ENCODE measurements at regions of chr18 and their contacts with region 1.

Region 1: DNA sequence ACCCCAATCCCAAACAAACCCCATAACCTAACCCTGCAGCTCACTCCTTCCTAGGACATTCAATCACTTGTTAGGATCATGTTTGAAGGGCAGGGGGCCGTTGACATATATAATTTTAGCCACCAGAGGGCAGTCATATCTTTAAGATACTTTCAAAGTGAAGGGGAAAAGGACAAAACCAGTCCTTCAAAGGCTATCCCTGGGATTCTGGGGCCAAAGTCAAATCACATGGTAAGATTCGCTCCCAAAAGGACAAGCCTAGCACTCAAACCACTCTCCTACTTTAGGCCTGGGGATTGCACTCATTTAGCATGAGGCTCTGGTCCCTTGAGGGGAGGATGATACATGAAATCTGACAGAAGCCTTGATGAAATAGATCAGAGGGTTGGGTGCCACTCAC is 44.6 kb downstream of the HAUS1 start:
- DNase-seq: peak; percentile 75
- ATAC-seq: peak; percentile 53
- H3K4me3 Mint-ChIP-seq: no peak overlapping the region
- H3K27ac Mint-ChIP-seq: peak overlapping the region; percentile 65
- H3K4me1 Mint-ChIP-seq: peaks cover 49% of the 10 kb centered on the region
- H3K27me3 Mint-ChIP-seq: no peaks in the 10 kb centered on the region

Region 2: GRCh38 chr18:46134920-46135675 is 13.7 kb before region 1 on chr18:
- CTCF ChIA-PET with region 1: interaction called, 10 read pairs
- POLR2A ChIA-PET with region 1: no interaction called
- DNase-seq: no peak
- ATAC-seq: no peak
- H3K4me3 Mint-ChIP-seq: no peak overlapping the region
- H3K27ac Mint-ChIP-seq: no peak overlapping the region
- H3K4me1 Mint-ChIP-seq: peaks cover 4% of the 10 kb centered on the region
- H3K27me3 Mint-ChIP-seq: no peaks in the 10 kb centered on the region

Region 3: GRCh38 chr18:46167971-46168370 is 19.2 kb after region 1 on chr18:
- CTCF ChIA-PET with region 1: interaction called, 219 read pairs
- POLR2A ChIA-PET with region 1: interaction called, 9 read pairs
- DNase-seq: peak; percentile 74
- ATAC-seq: peak; percentile 89
- H3K4me3 Mint-ChIP-seq: peak overlapping the region; percentile 69
- H3K27ac Mint-ChIP-seq: peak overlapping the region; percentile 86
- H3K4me1 Mint-ChIP-seq: peaks cover 59% of the 10 kb centered on the region
- H3K27me3 Mint-ChIP-seq: no peaks in the 10 kb centered on the region

Region 4: GRCh38 chr18:46281185-46282176 is 132.7 kb after region 1 on chr18:
- CTCF ChIA-PET with region 1: interaction called, 25 read pairs
- POLR2A ChIA-PET with region 1: no interaction called
- DNase-seq: peak; percentile 74
- ATAC-seq: peak; percentile 87
- H3K4me3 Mint-ChIP-seq: no peak overlapping the region
- H3K27ac Mint-ChIP-seq: no peak overlapping the region
- H3K4me1 Mint-ChIP-seq: peaks cover 15% of the 10 kb centered on the region
- H3K27me3 Mint-ChIP-seq: no peaks in the 10 kb centered on the region

Region 5: DNA sequence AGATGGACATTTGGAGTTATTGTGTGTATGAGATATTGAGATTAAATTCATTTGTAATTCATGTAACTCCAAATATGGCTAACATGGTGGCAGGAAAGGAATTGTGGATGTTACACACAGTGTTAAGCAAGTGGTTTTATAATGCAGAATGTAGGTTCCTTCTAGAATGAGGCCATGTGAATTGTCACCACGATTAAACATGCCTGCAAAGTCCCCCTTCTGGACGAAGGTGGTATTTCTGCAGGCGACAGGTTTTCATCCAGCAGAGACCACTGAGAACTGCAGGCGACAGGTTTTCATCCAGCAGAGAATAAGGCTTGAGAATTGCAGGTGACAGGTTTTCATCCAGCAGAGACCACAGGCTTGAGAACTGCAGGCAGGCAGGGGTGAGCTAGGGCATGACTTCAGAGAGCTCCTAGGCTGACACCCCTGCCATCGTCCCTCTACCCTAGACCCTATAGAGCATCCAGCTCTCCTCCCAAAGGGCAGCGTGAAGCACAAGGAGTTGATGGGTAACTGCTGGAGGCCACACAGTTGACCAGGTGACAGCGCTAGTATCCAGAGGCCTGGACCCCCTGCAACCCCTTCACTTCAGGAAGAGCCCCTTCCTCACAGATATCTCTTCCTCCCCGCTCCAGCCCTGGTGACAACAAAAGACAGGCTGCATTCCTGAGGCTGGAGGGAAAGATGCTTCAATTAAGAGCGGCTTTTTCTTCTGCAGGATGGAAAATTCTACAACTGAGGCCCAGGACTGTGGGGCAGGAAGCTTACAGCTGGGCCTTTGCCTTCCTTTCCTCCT is 332.4 kb after region 1 on chr18:
- CTCF ChIA-PET with region 1: interaction called, 16 read pairs
- POLR2A ChIA-PET with region 1: no interaction called
- DNase-seq: peak; percentile 72
- ATAC-seq: peak; percentile 73
- H3K4me3 Mint-ChIP-seq: no peak overlapping the region
- H3K27ac Mint-ChIP-seq: no peak overlapping the region
- H3K4me1 Mint-ChIP-seq: peaks cover 5% of the 10 kb centered on the region
- H3K27me3 Mint-ChIP-seq: peaks cover 9% of the 10 kb centered on the region

Region 6: DNA sequence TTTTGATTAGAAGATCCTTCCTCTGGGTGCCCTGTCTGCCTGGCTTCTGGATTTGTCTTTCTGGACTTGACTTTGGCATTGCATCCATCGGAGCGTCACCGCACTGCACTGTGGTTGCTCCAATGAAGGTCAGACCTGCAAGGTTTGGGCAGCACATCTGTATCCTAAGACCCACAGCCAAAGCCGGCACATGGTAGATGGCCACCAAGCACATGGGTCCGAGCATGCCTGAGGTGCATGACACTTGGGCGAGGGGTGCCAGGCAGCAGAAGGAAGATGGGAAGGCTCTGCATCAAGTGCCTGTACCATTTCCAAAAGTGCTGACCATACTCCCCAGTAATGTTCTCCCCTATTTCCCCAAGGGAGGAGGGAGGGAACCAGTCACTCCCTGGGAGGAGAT is 358.2 kb after region 1 on chr18:
- CTCF ChIA-PET with region 1: no interaction called
- POLR2A ChIA-PET with region 1: no interaction called
- DNase-seq: no peak
- ATAC-seq: no peak
- H3K4me3 Mint-ChIP-seq: no peak overlapping the region
- H3K27ac Mint-ChIP-seq: no peak overlapping the region
- H3K4me1 Mint-ChIP-seq: no peaks in the 10 kb centered on the region
- H3K27me3 Mint-ChIP-seq: no peaks in the 10 kb centered on the region

Region 7: GRCh38 chr18:46622999-46623398 is 474.2 kb after region 1 on chr18:
- CTCF ChIA-PET with region 1: interaction called, 13 read pairs
- POLR2A ChIA-PET with region 1: no interaction called
- DNase-seq: no peak
- ATAC-seq: peak; percentile 43
- H3K4me3 Mint-ChIP-seq: no peak overlapping the region
- H3K27ac Mint-ChIP-seq: peak overlapping the region; percentile 88
- H3K4me1 Mint-ChIP-seq: peaks cover 46% of the 10 kb centered on the region
- H3K27me3 Mint-ChIP-seq: peaks cover 2% of the 10 kb centered on the region